Aorta (tissue), 5 donors: ENCODE measurements at regions of chr10 and their contacts with region 1.

Region 1: DNA sequence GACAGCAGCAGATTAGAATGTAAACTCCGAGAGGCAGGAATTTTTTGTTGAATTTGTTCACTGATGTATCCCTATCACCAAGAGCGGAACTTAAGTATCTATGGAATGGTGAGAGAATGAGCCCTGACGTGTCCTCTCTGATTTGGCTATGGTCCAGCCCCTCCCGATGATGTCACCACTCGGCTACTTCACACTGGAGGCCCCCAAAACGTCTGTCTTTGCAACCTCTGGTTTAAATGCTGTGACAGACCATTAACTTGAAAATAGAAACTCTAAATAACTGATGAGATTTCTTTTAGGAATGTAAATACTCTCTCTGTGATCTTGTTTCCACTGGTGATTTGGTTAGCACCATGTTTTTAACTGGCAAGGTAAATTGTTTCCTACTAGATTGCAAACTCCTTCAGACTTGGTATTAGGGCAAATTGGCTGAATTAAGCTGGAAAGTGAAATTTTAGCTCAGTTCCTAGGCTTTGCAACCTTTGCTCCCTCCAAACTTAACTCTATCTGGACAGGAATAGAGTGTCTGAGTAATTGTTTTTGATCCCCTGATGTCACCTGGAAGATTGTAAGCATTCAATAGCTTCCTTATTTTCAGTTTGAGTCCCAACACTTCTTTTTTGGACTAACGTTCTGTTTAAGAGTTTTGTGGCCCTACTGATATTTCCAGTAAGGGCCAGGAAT is 19.1 kb downstream of the SLC16A12 start:
- DNase-seq: peak; percentile 69 to 87
- ATAC-seq: peak; percentile 59
- H3K4me3 ChIP-seq: no peak overlapping the region
- H3K27ac ChIP-seq: peak overlapping the region in 1 of 2 donors; percentile 73
- H3K4me1 ChIP-seq: peaks cover 0 to 4% of the 10 kb centered on the region in 2 donors
- H3K27me3 ChIP-seq: no peaks in the 10 kb centered on the region

Region 2: GRCh38 chr10:89458291-89458690 is 58.0 kb before region 1 on chr10:
- intact Hi-C with region 1: no loop called
- DNase-seq: no peak
- ATAC-seq: no peak
- H3K4me3 ChIP-seq: no peak overlapping the region
- H3K27ac ChIP-seq: peak overlapping the region in 1 of 2 donors; percentile 75
- H3K4me1 ChIP-seq: no peaks in the 10 kb centered on the region
- H3K27me3 ChIP-seq: no peaks in the 10 kb centered on the region

Region 3: DNA sequence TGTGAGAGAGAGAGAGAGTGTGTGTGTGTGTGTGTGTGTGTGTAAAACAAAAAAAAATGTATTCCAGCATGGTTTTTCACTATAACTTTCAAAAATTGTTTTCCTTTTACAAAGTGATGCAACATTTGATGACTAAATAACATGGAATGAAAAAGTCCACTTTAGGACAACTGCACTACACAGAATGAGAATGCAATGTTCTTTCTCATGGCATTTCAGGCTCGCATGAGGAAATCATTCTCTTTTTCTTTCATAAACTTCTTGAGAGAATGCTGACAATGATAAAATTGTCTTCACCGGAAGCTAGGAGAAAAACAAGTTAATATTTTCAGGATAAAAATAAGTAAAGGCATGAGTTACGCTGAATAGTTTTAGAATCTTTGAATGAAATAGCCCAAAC is 34.6 kb before region 1 on chr10:
- intact Hi-C with region 1: loop called in 1 of 2 experiments (anchors 5 kb)
- DNase-seq: no peak
- ATAC-seq: peak; percentile 74
- H3K4me3 ChIP-seq: no peak overlapping the region
- H3K27ac ChIP-seq: no peak overlapping the region
- H3K4me1 ChIP-seq: peaks cover 0 to 8% of the 10 kb centered on the region in 2 donors
- H3K27me3 ChIP-seq: no peaks in the 10 kb centered on the region

Region 4: GRCh38 chr10:89535171-89536012 is 19.1 kb after region 1 on chr10 and contains the start of gene SLC16A12:
- intact Hi-C with region 1: no loop called
- DNase-seq: peak; percentile 50 to 80
- ATAC-seq: peak; percentile 57
- H3K4me3 ChIP-seq: peak within 1 kb of the TSS; percentile 10 to 31
- H3K27ac ChIP-seq: no peak within 1 kb of the TSS
- H3K4me1 ChIP-seq: no peaks in the 10 kb centered on the region
- H3K27me3 ChIP-seq: no peaks in the 10 kb centered on the region
- total RNA-seq, gene SLC16A12: 0.21 to 0.45 TPM